CD14-positive monocyte (primary cell): ENCODE measurements at regions of chr1 and their contacts with region 1.

Region 1: GRCh38 chr1:157963713-157964112 is 29.7 kb upstream of the KIRREL1 start:
- DNase-seq: peak; percentile 46 to 59 (median 47)
- H3K4me3 ChIP-seq: no peak overlapping the region
- H3K4me3 Mint-ChIP-seq: no peak overlapping the region
- H3K27ac ChIP-seq: no peak overlapping the region
- H3K27ac Mint-ChIP-seq: no peak overlapping the region
- H3K4me1 ChIP-seq: no peaks in the 10 kb centered on the region
- H3K4me1 Mint-ChIP-seq: peaks cover 3% of the 10 kb centered on the region
- H3K27me3 ChIP-seq: peaks cover 8 to 23% of the 10 kb centered on the region in 2 donors
- H3K27me3 Mint-ChIP-seq: peaks cover 6 to 28% (median 25%) of the 10 kb centered on the region in 3 donors
- CTCF ChIP-seq: peak; percentile 93

Region 2: DNA sequence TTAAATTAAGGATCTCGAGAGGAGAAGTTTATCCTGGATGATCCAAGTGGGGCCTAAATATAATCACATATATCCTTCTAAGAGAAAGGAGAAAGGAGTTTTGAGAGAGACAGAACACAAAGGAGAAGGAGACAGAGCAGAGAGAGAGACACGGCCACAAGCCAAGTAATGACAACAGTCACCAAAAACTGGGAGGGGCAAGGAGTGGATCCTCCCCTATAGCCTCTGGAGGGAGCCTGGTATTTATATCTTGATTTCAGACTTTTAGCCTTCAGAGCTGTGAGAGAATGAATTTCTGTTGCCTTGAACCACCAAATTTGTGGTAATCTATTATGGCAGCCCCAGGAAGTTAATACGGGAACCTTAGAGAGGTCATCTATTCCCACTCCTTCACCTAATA is 167.5 kb after region 1 on chr1:
- intact Hi-C with region 1: loop called (anchors 2 to 10 kb)
- DNase-seq: no peak
- H3K4me3 ChIP-seq: no peak overlapping the region
- H3K4me3 Mint-ChIP-seq: no peak overlapping the region
- H3K27ac ChIP-seq: no peak overlapping the region
- H3K27ac Mint-ChIP-seq: no peak overlapping the region
- H3K4me1 ChIP-seq: no peaks in the 10 kb centered on the region
- H3K4me1 Mint-ChIP-seq: peaks cover 2% of the 10 kb centered on the region
- H3K27me3 ChIP-seq: no peaks in the 10 kb centered on the region
- H3K27me3 Mint-ChIP-seq: peaks cover 2 to 7% (median 4%) of the 10 kb centered on the region in 3 donors
- CTCF ChIP-seq: no peak

Region 3: GRCh38 chr1:158212320-158212719 is 248.6 kb after region 1 on chr1:
- intact Hi-C with region 1: no loop called
- DNase-seq: no peak
- H3K4me3 ChIP-seq: no peak overlapping the region
- H3K4me3 Mint-ChIP-seq: peak overlapping the region; percentile 41 to 48
- H3K27ac ChIP-seq: no peak overlapping the region
- H3K27ac Mint-ChIP-seq: no peak overlapping the region
- H3K4me1 ChIP-seq: no peaks in the 10 kb centered on the region
- H3K4me1 Mint-ChIP-seq: peaks cover 2% of the 10 kb centered on the region
- H3K27me3 ChIP-seq: peaks cover 15 to 45% of the 10 kb centered on the region in 2 donors
- H3K27me3 Mint-ChIP-seq: peaks cover 18 to 56% (median 33%) of the 10 kb centered on the region in 3 donors
- CTCF ChIP-seq: no peak